ENCODE measurements at regions of chr17 and their contacts with region 1.

Region 1: GRCh38 chr17:61201232-61201640 is 198.4 kb upstream of the TBX2 start:
- DNase-seq: peak in 1 of 2 donors; percentile 8
- H3K4me3 ChIP-seq: no peak overlapping the region
- H3K27ac ChIP-seq: peak overlapping the region; percentile 67 to 88 (median 68)
- H3K4me1 ChIP-seq: peaks cover 46 to 56% of the 10 kb centered on the region in 2 donors
- H3K27me3 ChIP-seq: no peaks in the 10 kb centered on the region
- CTCF ChIP-seq: no peak
- POLR2A ChIP-seq: no peak

Region 2: DNA sequence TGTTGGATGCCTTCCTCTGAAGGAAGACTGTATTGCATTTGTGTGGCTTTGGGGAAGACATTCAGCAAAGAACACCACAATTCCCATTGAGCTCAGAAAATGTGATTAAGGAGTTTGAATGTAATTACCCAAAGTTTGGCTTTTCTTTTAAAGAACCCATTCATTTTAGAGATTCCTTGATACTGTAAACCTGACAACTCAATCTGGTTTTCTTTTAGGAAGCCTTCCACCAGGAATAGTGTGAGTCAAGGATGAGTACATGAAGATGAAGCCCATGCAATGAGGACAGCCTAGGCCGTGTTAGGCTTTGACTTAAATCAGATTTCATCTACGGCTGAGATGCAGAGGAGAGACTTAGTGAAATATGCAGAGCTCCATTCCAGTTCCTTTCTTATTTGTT is 73.3 kb before region 1 on chr17:
- intact Hi-C with region 1: no loop called
- DNase-seq: no peak
- H3K4me3 ChIP-seq: no peak overlapping the region
- H3K27ac ChIP-seq: peak overlapping the region in 1 of 3 donors; percentile 21
- H3K4me1 ChIP-seq: peaks cover 15 to 27% of the 10 kb centered on the region in 2 donors
- H3K27me3 ChIP-seq: no peaks in the 10 kb centered on the region
- CTCF ChIP-seq: no peak
- POLR2A ChIP-seq: no peak

Region 3: GRCh38 chr17:61314368-61315078 is 113.3 kb after region 1 on chr17:
- intact Hi-C with region 1: loop called (anchors 5 kb)
- DNase-seq: peak; percentile 76 to 77
- H3K4me3 ChIP-seq: no peak overlapping the region
- H3K27ac ChIP-seq: peak overlapping the region in 2 of 3 donors; percentile 66 to 75
- H3K4me1 ChIP-seq: peaks cover 32 to 33% of the 10 kb centered on the region in 2 donors
- H3K27me3 ChIP-seq: no peaks in the 10 kb centered on the region
- CTCF ChIP-seq: peak in 2 of 6 experiments; percentile 17 to 23
- POLR2A ChIP-seq: no peak